ENCODE measurements at regions of chr1 and their contacts with region 1.

Region 1: GRCh38 chr1:247857069-247857984 is at the start of gene TRIM58:
- DNase-seq: peak; percentile 47
- H3K4me3 Mint-ChIP-seq: peak within 1 kb of the TSS; percentile 71
- H3K27ac Mint-ChIP-seq: no peak within 1 kb of the TSS
- H3K4me1 Mint-ChIP-seq: peaks cover 9% of the 10 kb centered on the region
- H3K27me3 Mint-ChIP-seq: peaks cover 62% of the 10 kb centered on the region
- total RNA-seq, gene TRIM58: 0.12 to 0.17 TPM

Region 2: GRCh38 chr1:247845011-247845692 is 12.2 kb before region 1 on chr1:
- CTCF ChIA-PET with region 1: no interaction called
- intact Hi-C with region 1: no loop called
- DNase-seq: no peak
- H3K4me3 Mint-ChIP-seq: no peak overlapping the region
- H3K27ac Mint-ChIP-seq: no peak overlapping the region
- H3K4me1 Mint-ChIP-seq: no peaks in the 10 kb centered on the region
- H3K27me3 Mint-ChIP-seq: no peaks in the 10 kb centered on the region

Region 3: GRCh38 chr1:247906504-247907047 is 49.2 kb after region 1 on chr1:
- CTCF ChIA-PET with region 1: no interaction called
- intact Hi-C with region 1: loop called (anchors 2 kb)
- DNase-seq: peak; percentile 60
- H3K4me3 Mint-ChIP-seq: peak overlapping the region; percentile 24
- H3K27ac Mint-ChIP-seq: peak overlapping the region; percentile 76
- H3K4me1 Mint-ChIP-seq: peaks cover 31% of the 10 kb centered on the region
- H3K27me3 Mint-ChIP-seq: peaks cover 3% of the 10 kb centered on the region

Measured in activated naive CD4-positive, alpha-beta T cell treated with anti-CD3 and anti-CD28 coated beads for 36 hours (primary cell).